OCI-LY7 (cell line): ENCODE measurements at regions of chrX and their contacts with region 1.

Region 1: DNA sequence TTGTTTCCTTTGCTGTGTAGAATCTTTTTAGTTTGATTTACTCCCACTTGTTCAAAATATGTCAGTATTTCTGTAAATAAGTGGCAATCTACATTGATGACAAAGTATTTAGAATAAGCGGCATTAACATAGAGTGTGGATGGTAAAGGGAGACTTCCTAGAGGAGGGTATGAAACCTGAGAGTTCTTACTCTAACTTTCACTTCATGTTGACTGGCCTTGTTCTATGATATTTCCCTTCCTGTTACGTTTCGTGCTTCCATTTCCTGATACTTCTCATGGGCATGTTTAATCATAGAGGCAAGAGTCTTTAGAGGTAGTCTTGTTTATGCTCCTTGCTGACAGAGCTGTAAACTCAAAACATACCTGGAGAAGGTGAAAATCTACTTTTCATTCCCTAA is 408.9 kb downstream of the GLUD2 start:
- DNase-seq: peak; percentile 61
- H3K4me3 ChIP-seq: peak overlapping the region; percentile 57
- H3K27ac ChIP-seq: peak overlapping the region; percentile 83
- H3K4me1 ChIP-seq: peaks cover 35% of the 10 kb centered on the region
- CTCF ChIP-seq: no peak

Region 2: DNA sequence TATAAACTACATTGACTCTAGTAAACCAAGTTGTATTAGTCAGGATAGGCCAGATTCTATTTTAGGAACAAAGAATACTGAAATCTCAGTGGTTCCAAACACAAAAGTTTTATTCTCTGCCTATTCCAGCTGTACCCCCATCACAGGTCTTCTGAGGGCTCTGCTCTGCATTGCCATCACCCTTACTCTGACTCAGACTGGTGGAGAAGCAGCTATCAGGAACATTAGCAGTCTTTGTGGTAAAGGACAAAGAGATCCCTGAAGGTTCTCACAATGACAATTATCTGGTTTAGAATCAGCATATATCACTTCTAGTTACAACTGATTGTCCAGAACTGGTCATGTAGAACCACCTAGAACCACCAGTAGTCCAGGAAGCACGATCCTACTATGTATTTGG is 157.8 kb before region 1 on chrX:
- CTCF ChIA-PET with region 1: no interaction called
- POLR2A ChIA-PET with region 1: no interaction called
- intact Hi-C with region 1: no loop called
- DNase-seq: no peak
- H3K4me3 ChIP-seq: no peak overlapping the region
- H3K27ac ChIP-seq: no peak overlapping the region
- H3K4me1 ChIP-seq: no peaks in the 10 kb centered on the region
- CTCF ChIP-seq: no peak

Region 3: GRCh38 chrX:121349263-121349662 is 107.1 kb before region 1 on chrX:
- CTCF ChIA-PET with region 1: no interaction called
- POLR2A ChIA-PET with region 1: no interaction called
- intact Hi-C with region 1: loop called (anchors 10 kb)
- DNase-seq: no peak
- H3K4me3 ChIP-seq: no peak overlapping the region
- H3K27ac ChIP-seq: no peak overlapping the region
- H3K4me1 ChIP-seq: no peaks in the 10 kb centered on the region
- CTCF ChIP-seq: no peak